CD8-positive, alpha-beta T cell (primary cell): ENCODE measurements at regions of chr9 and their contacts with region 1.

Region 1: DNA sequence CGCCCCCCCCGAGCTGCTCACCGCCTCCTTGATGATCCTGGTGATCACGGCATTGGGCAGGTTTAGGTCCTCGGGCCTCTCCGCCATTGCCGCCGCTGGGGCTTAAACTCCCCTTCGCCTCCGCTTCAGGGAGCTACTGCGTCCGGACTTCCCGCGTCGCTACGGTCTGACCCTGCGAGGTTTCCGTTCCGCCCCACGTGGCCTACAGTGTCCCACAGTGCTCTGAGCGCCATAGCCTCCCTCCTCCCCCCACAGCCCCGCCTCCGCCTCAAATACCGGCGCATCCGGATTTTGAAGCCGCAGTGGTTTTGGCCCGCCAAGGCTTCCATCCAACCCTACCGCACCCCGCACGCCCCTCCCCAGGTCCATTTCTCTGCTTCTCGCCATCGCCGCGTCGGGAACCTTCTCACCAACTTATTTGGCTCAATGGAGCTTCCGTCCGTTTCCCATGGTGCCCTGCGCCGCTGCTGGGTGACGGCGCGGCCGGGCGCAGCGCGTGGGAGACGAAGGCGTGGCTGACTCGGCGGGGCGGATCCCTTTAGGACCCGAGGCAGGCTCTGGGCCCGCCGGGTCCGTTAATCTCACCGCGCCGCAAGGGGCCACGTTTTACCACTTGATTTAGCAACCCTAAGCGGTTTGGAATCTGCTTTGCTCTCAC is at the starts of genes C9orf43 and POLE3:
- DNase-seq: peak; percentile 90 to 97 (median 94)
- ATAC-seq: peak; percentile 88
- H3K4me3 ChIP-seq: peak within 1 kb of the TSS; percentile 88 to 94
- H3K4me3 Mint-ChIP-seq: peak within 1 kb of the TSS; percentile 99
- H3K27ac ChIP-seq: peak within 1 kb of the TSS; percentile 84 to 99
- H3K27ac Mint-ChIP-seq: peak within 1 kb of the TSS; percentile 99
- H3K4me1 ChIP-seq: peaks cover 22% of the 10 kb centered on the region
- H3K4me1 Mint-ChIP-seq: peaks cover 29% of the 10 kb centered on the region
- H3K27me3 ChIP-seq: no peaks in the 10 kb centered on the region
- H3K27me3 Mint-ChIP-seq: no peaks in the 10 kb centered on the region
- CTCF ChIP-seq: no peak
- total RNA-seq, gene C9orf43: 0.61 to 0.73 TPM
- total RNA-seq, gene POLE3: 77.4 to 79.3 TPM

Region 2: DNA sequence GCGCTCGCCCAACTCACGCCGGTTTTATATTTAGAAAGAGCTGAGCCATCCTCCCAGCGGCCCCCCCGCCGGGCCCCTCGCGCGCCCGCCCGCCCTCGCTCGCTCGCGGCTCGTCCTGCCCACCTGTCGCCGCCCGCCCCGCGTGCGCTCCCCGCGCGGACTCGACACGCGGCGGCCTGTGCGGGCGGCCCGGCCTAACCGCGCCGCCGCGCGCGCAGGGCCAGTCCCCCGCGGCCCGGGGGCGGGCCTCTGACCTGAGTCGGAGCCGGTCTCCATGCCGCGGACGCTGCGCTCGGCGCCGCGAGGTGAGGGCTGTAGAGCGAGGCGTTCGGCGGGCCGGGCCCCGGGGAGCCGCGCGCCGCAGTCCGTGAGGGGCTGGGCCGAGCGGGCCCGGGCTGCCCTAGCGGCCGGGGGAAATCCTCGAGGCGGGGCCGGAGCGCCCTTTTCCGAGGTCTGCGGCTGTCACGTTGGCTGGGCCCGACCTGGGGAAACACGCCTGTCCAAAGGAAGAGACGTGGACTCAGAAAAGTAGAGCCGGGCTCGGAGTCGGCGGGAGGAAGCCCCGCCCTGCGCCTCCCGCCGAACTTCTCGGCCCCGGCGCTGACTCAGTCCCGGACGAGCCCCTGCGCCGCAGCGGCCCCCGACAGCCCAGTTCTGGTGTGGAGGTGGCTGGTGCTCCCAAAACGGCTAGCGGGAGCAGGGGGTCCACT is 1926.3 kb before region 1 on chr9 and contains the start of gene ECPAS:
- CTCF ChIA-PET with region 1: no interaction called
- POLR2A ChIA-PET with region 1: no interaction called
- intact Hi-C with region 1: loop called (anchors 5 to 10 kb)
- DNase-seq: peak; percentile 35 to 79 (median 63)
- ATAC-seq: peak; percentile 64
- H3K4me3 ChIP-seq: peak within 1 kb of the TSS; percentile 90 to 99
- H3K4me3 Mint-ChIP-seq: peak within 1 kb of the TSS; percentile 86
- H3K27ac ChIP-seq: peak within 1 kb of the TSS; percentile 81 to 85
- H3K27ac Mint-ChIP-seq: peak within 1 kb of the TSS; percentile 81
- H3K4me1 ChIP-seq: peaks cover 7% of the 10 kb centered on the region
- H3K4me1 Mint-ChIP-seq: peaks cover 29% of the 10 kb centered on the region
- H3K27me3 ChIP-seq: no peaks in the 10 kb centered on the region
- H3K27me3 Mint-ChIP-seq: no peaks in the 10 kb centered on the region
- CTCF ChIP-seq: no peak
- total RNA-seq, gene ECPAS: 36.4 to 44.6 TPM

Region 3: DNA sequence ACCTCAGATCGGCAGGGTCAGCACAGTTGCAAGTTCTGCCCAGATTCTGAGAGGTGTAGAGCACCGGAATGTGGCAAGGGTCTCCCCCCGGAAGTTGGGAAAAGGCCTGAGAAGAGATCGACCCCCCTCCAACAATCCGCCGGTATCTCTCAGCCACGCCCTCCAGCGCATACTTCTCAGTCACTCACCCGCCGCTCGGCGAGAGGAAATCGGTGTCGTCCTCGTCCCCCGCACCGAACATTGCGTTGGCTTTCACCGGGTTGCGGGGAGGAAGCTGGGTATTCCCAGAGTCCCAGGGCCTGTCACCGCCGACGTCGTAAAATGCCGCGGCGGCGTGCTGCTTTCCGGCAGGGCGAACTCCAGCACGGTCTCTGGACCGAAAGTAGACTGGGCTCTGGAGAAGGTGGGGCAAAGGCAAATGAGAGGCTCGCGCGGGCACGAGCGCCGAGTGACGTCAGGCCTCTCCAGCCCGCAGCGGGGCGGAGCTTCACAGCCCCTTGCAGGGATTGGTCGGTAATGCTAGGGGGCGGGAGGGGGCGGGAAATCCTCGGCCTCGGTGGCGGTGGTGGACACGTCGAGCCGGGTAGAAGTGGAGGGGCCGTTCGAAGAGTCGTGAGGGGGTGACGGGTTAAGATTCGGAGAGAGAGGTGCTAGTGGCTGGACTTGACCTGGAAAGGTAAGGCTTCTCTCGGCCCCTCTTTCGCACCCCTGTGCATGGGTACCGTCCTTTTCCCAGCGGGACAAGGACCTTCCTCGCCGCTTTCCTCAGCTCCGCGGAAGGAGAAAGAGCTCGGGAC is 189.1 kb before region 1 on chr9 and contains the starts of genes FKBP15 and SLC31A1:
- CTCF ChIA-PET with region 1: no interaction called
- POLR2A ChIA-PET with region 1: interaction called, 9 read pairs
- intact Hi-C with region 1: loop called (anchors 1 kb)
- DNase-seq: peak; percentile 91 to 99 (median 95)
- ATAC-seq: peak; percentile 99
- H3K4me3 ChIP-seq: peak within 1 kb of the TSS; percentile 84 to 94
- H3K4me3 Mint-ChIP-seq: peak within 1 kb of the TSS; percentile 95
- H3K27ac ChIP-seq: peak within 1 kb of the TSS; percentile 71 to 90
- H3K27ac Mint-ChIP-seq: peak within 1 kb of the TSS; percentile 94
- H3K4me1 ChIP-seq: peaks cover 22% of the 10 kb centered on the region
- H3K4me1 Mint-ChIP-seq: peaks cover 57% of the 10 kb centered on the region
- H3K27me3 ChIP-seq: no peaks in the 10 kb centered on the region
- H3K27me3 Mint-ChIP-seq: no peaks in the 10 kb centered on the region
- CTCF ChIP-seq: no peak
- total RNA-seq, gene FKBP15: 8.7 to 8.9 TPM
- total RNA-seq, gene SLC31A1: 8.7 to 9.6 TPM

Region 4: DNA sequence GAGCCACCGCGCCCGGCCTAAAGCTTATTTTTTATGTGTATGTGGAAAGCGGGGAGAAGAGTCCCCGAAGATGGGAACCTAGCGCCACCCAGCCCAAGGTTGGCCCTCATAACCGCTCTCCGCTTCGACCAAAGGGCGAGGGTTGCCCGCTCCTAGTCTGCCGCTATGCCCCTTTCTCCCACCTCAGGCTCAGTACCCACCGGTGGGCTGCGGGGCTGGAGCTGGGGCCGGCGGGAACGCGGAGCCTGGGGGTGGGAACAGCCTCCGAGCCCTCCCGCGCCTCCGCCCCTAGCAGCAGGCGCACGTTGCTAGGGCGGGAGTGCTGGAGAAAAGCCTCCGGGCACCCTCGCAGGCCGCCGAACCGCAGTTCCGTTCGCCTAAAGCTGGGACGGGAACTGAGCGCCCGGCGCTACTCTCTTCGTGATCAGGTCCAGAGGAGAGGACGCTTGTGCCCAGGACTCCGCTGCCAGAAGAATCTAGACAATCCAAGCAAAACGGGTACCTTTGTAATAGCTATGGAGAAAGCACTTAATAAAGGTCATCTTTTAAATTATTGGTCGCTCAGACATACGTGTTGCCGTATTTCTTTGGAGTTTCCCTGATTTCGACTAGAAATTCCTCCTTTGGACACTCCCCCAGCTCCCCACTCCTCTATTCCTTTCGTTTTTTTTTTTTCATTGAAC is 70.2 kb before region 1 on chr9 and contains the start of gene WDR31:
- CTCF ChIA-PET with region 1: no interaction called
- POLR2A ChIA-PET with region 1: interaction called, 3 read pairs
- intact Hi-C with region 1: loop called in 1 of 2 experiments (anchors 2 kb)
- DNase-seq: peak; percentile 58 to 90 (median 78)
- ATAC-seq: peak; percentile 99
- H3K4me3 ChIP-seq: peak within 1 kb of the TSS; percentile 70 to 83
- H3K4me3 Mint-ChIP-seq: peak within 1 kb of the TSS; percentile 83
- H3K27ac ChIP-seq: peak within 1 kb of the TSS in 1 of 2 experiments; percentile 46
- H3K27ac Mint-ChIP-seq: no peak within 1 kb of the TSS
- H3K4me1 ChIP-seq: peaks cover 19% of the 10 kb centered on the region
- H3K4me1 Mint-ChIP-seq: peaks cover 24% of the 10 kb centered on the region
- H3K27me3 ChIP-seq: peaks cover 0 to 3% of the 10 kb centered on the region in 2 experiments
- H3K27me3 Mint-ChIP-seq: peaks cover 2% of the 10 kb centered on the region
- CTCF ChIP-seq: no peak
- total RNA-seq, gene WDR31: 0.11 to 0.43 TPM

Region 5: GRCh38 chr9:113376634-113377567 is 33.4 kb before region 1 on chr9 and contains the start of gene HDHD3:
- CTCF ChIA-PET with region 1: no interaction called
- POLR2A ChIA-PET with region 1: interaction called, 4 read pairs
- intact Hi-C with region 1: loop called (anchors 1 to 2 kb)
- DNase-seq: peak; percentile 40 to 91 (median 76)
- ATAC-seq: peak; percentile 90
- H3K4me3 ChIP-seq: peak within 1 kb of the TSS; percentile 88 to 94
- H3K4me3 Mint-ChIP-seq: peak within 1 kb of the TSS; percentile 86
- H3K27ac ChIP-seq: peak within 1 kb of the TSS; percentile 69
- H3K27ac Mint-ChIP-seq: peak within 1 kb of the TSS; percentile 84
- H3K4me1 ChIP-seq: peaks cover 8% of the 10 kb centered on the region
- H3K4me1 Mint-ChIP-seq: peaks cover 13% of the 10 kb centered on the region
- H3K27me3 ChIP-seq: no peaks in the 10 kb centered on the region
- H3K27me3 Mint-ChIP-seq: no peaks in the 10 kb centered on the region
- CTCF ChIP-seq: no peak
- total RNA-seq, gene HDHD3: 10.2 to 11.0 TPM

Region 6: DNA sequence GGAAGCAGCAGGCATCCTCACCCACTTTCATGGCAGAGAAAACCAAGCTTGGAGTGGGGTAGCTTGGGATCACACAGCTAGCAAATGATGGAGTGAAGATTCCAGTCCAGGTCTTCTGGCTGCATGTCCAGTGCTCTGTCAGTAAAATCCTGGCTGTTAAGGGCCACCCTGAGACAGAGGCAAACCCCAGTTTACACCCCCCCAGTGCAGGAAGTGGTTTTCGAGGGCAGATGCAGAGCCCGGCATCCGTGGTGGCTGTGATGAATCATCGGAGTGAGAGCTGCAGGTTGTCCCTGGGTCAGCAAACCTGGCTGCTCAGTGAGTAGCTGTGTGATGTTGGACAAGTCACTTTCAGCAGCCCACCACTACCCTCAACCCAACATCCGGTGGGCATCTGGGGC is 168.5 kb after region 1 on chr9:
- CTCF ChIA-PET with region 1: interaction called, 3 read pairs
- POLR2A ChIA-PET with region 1: interaction called, 11 read pairs
- intact Hi-C with region 1: loop called in 1 of 2 experiments (anchors 1 kb)
- DNase-seq: peak; percentile 50 to 92 (median 87)
- ATAC-seq: peak; percentile 56
- H3K4me3 ChIP-seq: peak overlapping the region; percentile 15 to 24
- H3K4me3 Mint-ChIP-seq: peak overlapping the region; percentile 79
- H3K27ac ChIP-seq: peak overlapping the region; percentile 37 to 76
- H3K27ac Mint-ChIP-seq: peak overlapping the region; percentile 94
- H3K4me1 ChIP-seq: peaks cover 57% of the 10 kb centered on the region
- H3K4me1 Mint-ChIP-seq: peaks cover 81% of the 10 kb centered on the region
- H3K27me3 ChIP-seq: no peaks in the 10 kb centered on the region
- H3K27me3 Mint-ChIP-seq: no peaks in the 10 kb centered on the region
- CTCF ChIP-seq: no peak